Activated CD4-positive, alpha-beta T cell treated with anti-CD3 and anti-CD28 coated beads for 36 hours (primary cell): ENCODE measurements at regions of chrX and their contacts with region 1.

Region 1: DNA sequence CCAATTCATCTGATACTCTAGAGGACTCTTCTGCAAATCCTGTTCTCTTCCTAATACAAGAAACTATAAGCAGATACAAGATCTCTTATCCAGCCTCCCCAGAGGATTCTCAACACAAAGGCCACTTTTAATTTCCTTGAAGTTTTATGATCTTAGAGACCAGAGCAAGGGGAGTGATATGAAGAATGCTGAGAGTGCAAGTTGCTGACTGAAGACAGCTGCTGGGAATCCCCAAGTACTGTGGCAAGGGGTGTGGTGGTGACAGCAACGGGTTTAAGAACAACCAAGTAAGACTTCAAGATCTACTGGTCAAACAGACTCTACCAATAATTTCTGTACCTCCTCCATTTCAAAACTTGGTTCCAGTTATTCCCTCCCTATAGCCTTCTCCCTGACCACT is 7.0 kb downstream of the AMMECR1 start:
- DNase-seq: peak; percentile 62
- ATAC-seq: peak; percentile 85
- H3K4me3 Mint-ChIP-seq: no peak overlapping the region
- H3K27ac Mint-ChIP-seq: no peak overlapping the region
- H3K4me1 Mint-ChIP-seq: peaks cover 61% of the 10 kb centered on the region
- H3K27me3 Mint-ChIP-seq: no peaks in the 10 kb centered on the region

Region 2: GRCh38 chrX:110226931-110227330 is 84.0 kb before region 1 on chrX:
- CTCF ChIA-PET with region 1: interaction called, 3 read pairs
- POLR2A ChIA-PET with region 1: no interaction called
- intact Hi-C with region 1: loop called (anchors 2 to 10 kb)
- DNase-seq: no peak
- ATAC-seq: no peak
- H3K4me3 Mint-ChIP-seq: no peak overlapping the region
- H3K27ac Mint-ChIP-seq: no peak overlapping the region
- H3K4me1 Mint-ChIP-seq: peaks cover 44% of the 10 kb centered on the region
- H3K27me3 Mint-ChIP-seq: no peaks in the 10 kb centered on the region

Region 3: DNA sequence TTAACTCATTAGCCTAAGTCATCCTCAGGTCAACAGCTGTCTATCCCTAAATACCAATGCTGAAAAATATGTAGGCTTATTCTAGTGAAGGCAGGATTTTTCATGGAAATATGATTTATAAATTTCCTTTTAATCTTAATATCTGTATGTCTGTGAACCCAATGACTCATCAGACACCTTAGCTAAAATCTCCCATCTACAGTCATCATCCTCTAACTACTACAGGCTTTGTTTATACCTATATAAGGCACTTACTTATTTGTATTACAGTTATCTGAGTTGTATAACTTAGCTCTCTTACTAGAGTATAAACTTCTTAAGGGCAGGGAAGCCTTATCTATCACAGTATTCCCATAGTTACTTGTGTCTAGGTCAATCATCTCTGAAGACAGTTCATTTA is 17.2 kb before region 1 on chrX:
- CTCF ChIA-PET with region 1: interaction called, 3 read pairs
- POLR2A ChIA-PET with region 1: no interaction called
- intact Hi-C with region 1: loop called in 1 of 2 experiments (anchors 1 kb)
- DNase-seq: no peak
- ATAC-seq: peak; percentile 33
- H3K4me3 Mint-ChIP-seq: no peak overlapping the region
- H3K27ac Mint-ChIP-seq: no peak overlapping the region
- H3K4me1 Mint-ChIP-seq: peaks cover 19% of the 10 kb centered on the region
- H3K27me3 Mint-ChIP-seq: no peaks in the 10 kb centered on the region

Region 4: GRCh38 chrX:110359273-110359672 is 48.4 kb after region 1 on chrX:
- CTCF ChIA-PET with region 1: no interaction called
- POLR2A ChIA-PET with region 1: no interaction called
- intact Hi-C with region 1: no loop called
- DNase-seq: no peak
- ATAC-seq: no peak
- H3K4me3 Mint-ChIP-seq: no peak overlapping the region
- H3K27ac Mint-ChIP-seq: no peak overlapping the region
- H3K4me1 Mint-ChIP-seq: no peaks in the 10 kb centered on the region
- H3K27me3 Mint-ChIP-seq: no peaks in the 10 kb centered on the region